ENCODE measurements at regions of chr2 and their contacts with region 1.

Region 1: GRCh38 chr2:241734467-241735208 is at the start of gene D2HGDH:
- DNase-seq: peak; percentile 86 to 98 (median 94)
- ATAC-seq: peak; percentile 92
- H3K4me3 ChIP-seq: peak within 1 kb of the TSS; percentile 71
- H3K4me3 Mint-ChIP-seq: peak within 1 kb of the TSS; percentile 85
- H3K27ac ChIP-seq: peak within 1 kb of the TSS in 1 of 2 donors; percentile 71
- H3K27ac Mint-ChIP-seq: peak within 1 kb of the TSS; percentile 65
- H3K4me1 ChIP-seq: peaks cover 48% of the 10 kb centered on the region
- H3K4me1 Mint-ChIP-seq: peaks cover 12% of the 10 kb centered on the region
- H3K27me3 ChIP-seq: no peaks in the 10 kb centered on the region
- H3K27me3 Mint-ChIP-seq: no peaks in the 10 kb centered on the region
- CTCF ChIP-seq: no peak
- total RNA-seq, gene D2HGDH: 27.6 to 30.6 TPM

Region 2: DNA sequence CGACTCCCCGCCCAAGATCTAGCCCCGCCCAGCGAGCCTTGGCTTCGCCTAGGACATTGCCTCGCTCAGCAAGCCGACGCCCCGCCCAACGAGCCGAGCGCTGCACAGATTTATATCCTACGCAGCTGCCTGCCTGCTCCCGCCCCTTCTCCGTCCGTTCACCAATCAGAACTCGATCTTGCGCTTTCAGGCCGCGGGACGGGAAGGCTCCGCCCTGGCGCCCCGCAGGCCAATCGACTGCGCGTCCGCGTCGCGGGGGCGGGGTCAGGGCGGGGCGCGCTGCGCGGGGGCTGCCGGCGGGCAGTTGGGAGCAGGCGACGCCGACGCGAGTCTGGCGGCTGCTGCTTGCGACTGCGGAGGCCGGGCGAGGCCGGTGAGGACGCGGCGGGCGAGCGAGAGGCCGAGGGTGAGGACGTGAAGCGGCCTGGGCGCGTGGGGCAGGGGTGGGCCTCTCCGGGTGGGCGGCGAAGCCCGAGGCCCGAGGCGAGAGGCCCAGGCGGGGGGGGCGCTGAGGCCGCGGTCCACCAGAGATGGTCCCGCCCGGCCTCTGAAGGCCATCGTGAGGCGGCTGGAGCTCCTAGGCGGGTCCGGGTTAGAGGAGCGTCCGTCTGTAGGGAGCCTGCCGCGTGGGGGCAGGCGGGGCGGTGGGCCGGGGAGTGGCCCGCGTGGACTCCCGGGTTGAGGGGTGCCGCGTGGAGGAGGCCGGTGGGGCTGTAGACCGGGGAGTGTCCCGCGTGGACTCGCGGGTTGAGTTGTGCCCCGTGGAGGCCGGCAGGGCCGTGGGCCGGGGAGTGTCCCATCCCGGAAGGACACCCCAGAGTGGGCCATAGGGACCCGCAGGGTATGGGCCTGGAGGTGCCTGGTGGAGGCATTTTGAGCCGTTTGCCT is 378.4 kb before region 1 on chr2 and contains the start of gene FARP2:
- CTCF ChIA-PET with region 1: no interaction called
- POLR2A ChIA-PET with region 1: no interaction called
- intact Hi-C with region 1: loop called in 1 of 2 experiments (anchors 5 kb)
- DNase-seq: peak; percentile 95 to 100 (median 97)
- ATAC-seq: peak; percentile 94
- H3K4me3 ChIP-seq: peak within 1 kb of the TSS; percentile 55
- H3K4me3 Mint-ChIP-seq: peak within 1 kb of the TSS; percentile 86
- H3K27ac ChIP-seq: peak within 1 kb of the TSS in 1 of 2 donors; percentile 20
- H3K27ac Mint-ChIP-seq: peak within 1 kb of the TSS; percentile 77
- H3K4me1 ChIP-seq: peaks cover 20% of the 10 kb centered on the region
- H3K4me1 Mint-ChIP-seq: peaks cover 28% of the 10 kb centered on the region
- H3K27me3 ChIP-seq: no peaks in the 10 kb centered on the region
- H3K27me3 Mint-ChIP-seq: no peaks in the 10 kb centered on the region
- CTCF ChIP-seq: no peak
- total RNA-seq, gene FARP2: 17.2 to 18.3 TPM

Region 3: DNA sequence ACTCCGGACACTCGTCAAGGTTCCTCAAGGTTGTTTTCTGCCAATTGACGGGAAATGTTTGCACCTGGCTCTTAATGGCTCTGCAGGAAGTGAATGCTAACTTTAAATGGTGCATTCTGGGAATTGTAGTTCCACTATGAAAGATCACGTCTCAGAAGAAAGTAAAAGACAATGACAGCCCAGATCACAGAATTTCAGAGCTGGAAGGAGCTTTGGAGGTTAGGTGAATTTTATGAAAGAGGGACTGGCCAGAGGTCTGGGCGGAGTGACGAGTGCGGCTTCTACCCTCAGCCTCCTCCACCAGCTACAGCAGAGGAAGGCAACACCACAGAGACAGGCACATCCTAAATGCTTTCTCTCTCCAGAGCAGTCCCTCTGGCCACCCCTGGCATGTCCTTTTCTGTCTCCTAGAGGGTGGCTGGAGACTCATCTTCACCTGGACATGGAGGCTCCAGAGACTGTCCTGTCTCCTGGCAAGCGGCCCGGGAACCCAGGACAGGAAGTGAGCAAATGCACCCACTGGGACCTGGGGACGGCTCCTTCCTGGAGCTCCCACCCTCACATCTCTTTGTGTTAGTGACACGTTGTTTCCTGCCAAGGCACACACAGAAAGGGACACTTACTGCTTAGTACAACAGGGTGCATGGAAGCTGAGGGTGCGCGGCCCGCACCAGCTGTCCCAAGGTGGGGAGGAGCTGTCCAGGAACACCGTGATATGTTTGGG is 117.0 kb before region 1 on chr2:
- CTCF ChIA-PET with region 1: no interaction called
- POLR2A ChIA-PET with region 1: interaction called, 6 read pairs
- intact Hi-C with region 1: loop called in 1 of 2 experiments (anchors 5 kb)
- DNase-seq: peak in 8 of 14 experiments; percentile 17 to 81 (median 44)
- ATAC-seq: peak; percentile 84
- H3K4me3 ChIP-seq: peak overlapping the region; percentile 61
- H3K4me3 Mint-ChIP-seq: peak overlapping the region; percentile 88
- H3K27ac ChIP-seq: peak overlapping the region; percentile 58 to 75
- H3K27ac Mint-ChIP-seq: peak overlapping the region; percentile 77
- H3K4me1 ChIP-seq: peaks cover 26% of the 10 kb centered on the region
- H3K4me1 Mint-ChIP-seq: peaks cover 30% of the 10 kb centered on the region
- H3K27me3 ChIP-seq: no peaks in the 10 kb centered on the region
- H3K27me3 Mint-ChIP-seq: no peaks in the 10 kb centered on the region
- CTCF ChIP-seq: no peak

Region 4: GRCh38 chr2:241649404-241649803 is 85.2 kb before region 1 on chr2:
- CTCF ChIA-PET with region 1: no interaction called
- POLR2A ChIA-PET with region 1: no interaction called
- intact Hi-C with region 1: no loop called
- DNase-seq: no peak
- ATAC-seq: no peak
- H3K4me3 ChIP-seq: no peak overlapping the region
- H3K4me3 Mint-ChIP-seq: no peak overlapping the region
- H3K27ac ChIP-seq: no peak overlapping the region
- H3K27ac Mint-ChIP-seq: no peak overlapping the region
- H3K4me1 ChIP-seq: peaks cover 8% of the 10 kb centered on the region
- H3K4me1 Mint-ChIP-seq: peaks cover 15% of the 10 kb centered on the region
- H3K27me3 ChIP-seq: no peaks in the 10 kb centered on the region
- H3K27me3 Mint-ChIP-seq: no peaks in the 10 kb centered on the region
- CTCF ChIP-seq: no peak

Region 5: DNA sequence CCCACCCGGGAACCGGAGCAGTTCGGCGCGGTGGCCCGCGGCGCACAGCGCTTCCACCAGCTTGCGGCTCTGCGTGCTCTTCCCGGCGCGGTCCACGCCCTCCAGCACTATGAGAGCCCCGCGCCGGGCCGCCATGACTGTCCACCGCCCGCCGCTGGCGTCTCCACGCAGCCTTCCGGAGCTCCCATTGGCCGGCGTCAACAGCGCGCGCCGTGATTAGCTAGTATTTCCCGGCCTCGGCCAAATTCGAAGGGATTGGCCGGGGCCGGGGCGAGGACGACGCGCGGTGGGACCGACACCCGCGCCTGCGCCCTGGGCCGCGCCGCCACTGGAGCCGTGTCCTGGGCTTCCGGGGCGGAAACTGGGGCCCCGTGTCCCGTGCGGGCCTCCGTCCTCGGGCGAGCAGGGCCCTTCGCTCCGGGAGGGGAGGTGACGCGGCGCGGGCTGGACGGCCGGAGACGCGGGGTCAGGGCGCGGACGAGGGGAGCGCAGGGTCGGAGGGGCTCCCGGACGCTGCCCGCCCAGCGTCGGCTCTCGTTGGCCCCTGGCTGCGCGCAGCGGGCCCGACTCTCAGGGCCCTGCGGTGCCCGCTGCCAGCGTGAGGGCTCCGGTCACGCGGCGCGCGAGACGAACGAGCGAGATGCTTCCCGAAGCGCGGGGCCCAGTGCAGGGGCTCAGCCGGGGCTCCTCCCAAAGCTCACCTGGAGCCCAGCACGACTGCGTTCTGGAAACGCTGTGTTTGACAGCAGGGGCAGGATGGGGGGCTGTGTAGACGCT is 47.8 kb before region 1 on chr2 and contains the start of gene DTYMK:
- CTCF ChIA-PET with region 1: no interaction called
- POLR2A ChIA-PET with region 1: interaction called, 10 read pairs
- intact Hi-C with region 1: loop called (anchors 1 kb)
- DNase-seq: peak; percentile 89 to 98 (median 95)
- ATAC-seq: peak; percentile 90
- H3K4me3 ChIP-seq: peak within 1 kb of the TSS; percentile 84
- H3K4me3 Mint-ChIP-seq: peak within 1 kb of the TSS; percentile 95
- H3K27ac ChIP-seq: peak within 1 kb of the TSS; percentile 60 to 85
- H3K27ac Mint-ChIP-seq: peak within 1 kb of the TSS; percentile 84
- H3K4me1 ChIP-seq: peaks cover 37% of the 10 kb centered on the region
- H3K4me1 Mint-ChIP-seq: peaks cover 38% of the 10 kb centered on the region
- H3K27me3 ChIP-seq: no peaks in the 10 kb centered on the region
- H3K27me3 Mint-ChIP-seq: no peaks in the 10 kb centered on the region
- CTCF ChIP-seq: no peak
- total RNA-seq, gene DTYMK: 4.8 to 6.0 TPM

Region 6: GRCh38 chr2:241859436-241860183 is 125.0 kb after region 1 on chr2:
- CTCF ChIA-PET with region 1: no interaction called
- POLR2A ChIA-PET with region 1: interaction called, 3 read pairs
- intact Hi-C with region 1: loop called in 1 of 2 experiments (anchors 5 kb)
- DNase-seq: peak in 6 of 14 experiments; percentile 44 to 60 (median 52)
- ATAC-seq: peak; percentile 25
- H3K4me3 ChIP-seq: peak overlapping the region; percentile 71
- H3K4me3 Mint-ChIP-seq: peak overlapping the region; percentile 87
- H3K27ac ChIP-seq: peak overlapping the region in 1 of 2 donors; percentile 61
- H3K27ac Mint-ChIP-seq: peak overlapping the region; percentile 81
- H3K4me1 ChIP-seq: peaks cover 95% of the 10 kb centered on the region
- H3K4me1 Mint-ChIP-seq: peaks cover 45% of the 10 kb centered on the region
- H3K27me3 ChIP-seq: peaks cover 0 to 6% of the 10 kb centered on the region in 2 experiments
- H3K27me3 Mint-ChIP-seq: peaks cover 30% of the 10 kb centered on the region
- CTCF ChIP-seq: no peak

Measured in CD4-positive, alpha-beta T cell (primary cell).